Naive thymus-derived CD8-positive, alpha-beta T cell (primary cell): ENCODE measurements at regions of chr13 and their contacts with region 1.

Region 1: GRCh38 chr13:27432611-27433210 is 8.3 kb downstream of the GTF3A start:
- DNase-seq: peak in 3 of 10 donors; percentile 27 to 36 (median 28)
- ATAC-seq: peak; percentile 56 to 93
- H3K4me3 Mint-ChIP-seq: peak overlapping the region in 9 of 10 donors; percentile 9 to 66 (median 48)
- H3K27ac Mint-ChIP-seq: peak overlapping the region; percentile 51 to 90 (median 86)
- H3K4me1 Mint-ChIP-seq: peaks cover 18 to 58% (median 53%) of the 10 kb centered on the region in 4 donors
- H3K27me3 Mint-ChIP-seq: no peaks in the 10 kb centered on the region

Region 2: GRCh38 chr13:27449936-27450828 is 17.5 kb after region 1 on chr13 and contains the start of gene MTIF3:
- POLR2A ChIA-PET with region 1: interaction called, 515 read pairs
- DNase-seq: peak; percentile 91 to 99 (median 98)
- ATAC-seq: peak; percentile 80
- H3K4me3 Mint-ChIP-seq: peak within 1 kb of the TSS; percentile 86 to 98 (median 95)
- H3K27ac Mint-ChIP-seq: peak within 1 kb of the TSS; percentile 95 to 99 (median 98)
- H3K4me1 Mint-ChIP-seq: peaks cover 27 to 75% (median 60%) of the 10 kb centered on the region in 4 donors
- H3K27me3 Mint-ChIP-seq: peaks cover 0 to 2% (median 0%) of the 10 kb centered on the region in 5 donors
- polyA plus RNA-seq, gene MTIF3: 46.6 to 69.2 (median 60.8) TPM